Prostate gland (tissue), 2 donors: ENCODE measurements at regions of chr2 and their contacts with region 1.

Region 1: DNA sequence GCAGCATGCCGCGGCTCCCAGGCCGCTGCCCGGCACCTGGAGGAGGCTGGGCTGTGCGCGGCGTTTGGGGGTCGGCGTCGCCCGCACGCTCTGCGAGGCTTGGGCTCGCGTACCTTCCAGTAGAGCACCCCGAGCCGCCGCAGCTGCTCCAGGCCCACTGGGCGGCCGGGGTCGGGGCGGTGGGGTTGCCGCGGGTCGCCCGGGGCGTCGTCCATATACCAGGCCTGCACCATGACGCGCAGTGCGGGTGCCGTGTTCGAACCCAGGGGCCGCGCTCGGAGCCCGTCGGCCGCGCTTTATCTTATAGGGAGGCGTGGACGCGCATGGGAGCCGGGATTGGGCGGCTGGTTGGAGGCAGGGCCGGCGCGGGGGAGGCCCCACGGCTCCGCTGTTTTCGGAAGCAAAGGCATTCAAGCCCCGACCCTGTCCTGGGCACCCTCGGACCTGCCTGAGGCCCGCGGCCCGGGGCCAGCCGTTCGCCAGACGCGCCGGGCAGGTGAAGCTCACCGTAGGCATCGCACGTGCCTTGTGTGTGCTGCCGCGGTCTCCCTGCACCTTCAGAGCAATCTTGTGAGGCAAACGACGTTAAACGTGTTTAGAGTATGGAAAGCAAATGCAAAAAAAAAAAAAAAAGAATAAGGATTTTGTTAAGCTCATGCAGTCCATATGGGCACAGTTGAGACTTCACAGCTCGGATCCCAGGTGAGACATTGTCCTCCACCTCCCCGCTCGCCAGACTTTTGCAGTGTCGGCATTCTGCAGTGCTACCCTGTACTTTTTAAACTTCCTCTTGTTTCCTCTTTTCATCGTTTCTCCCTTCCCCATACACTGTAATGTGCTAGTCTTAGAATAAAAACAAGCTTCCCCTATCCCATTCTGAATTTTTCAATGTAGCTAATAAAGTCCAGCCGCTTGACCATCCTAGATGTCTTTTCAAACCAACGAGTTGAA is at the start of gene ADI1:
- DNase-seq: peak; percentile 75
- H3K4me3 ChIP-seq: peak within 1 kb of the TSS; percentile 85 to 95
- H3K27ac ChIP-seq: peak within 1 kb of the TSS; percentile 98 to 99
- H3K4me1 ChIP-seq: peaks cover 7% of the 10 kb centered on the region
- H3K27me3 ChIP-seq: no peaks in the 10 kb centered on the region
- CTCF ChIP-seq: no peak
- POLR2A ChIP-seq: peak; percentile 52
- total RNA-seq, gene ADI1: 81.7 to 270 TPM

Region 2: GRCh38 chr2:3449086-3449485 is 70.4 kb before region 1 on chr2:
- intact Hi-C with region 1: no loop called
- DNase-seq: no peak
- H3K4me3 ChIP-seq: no peak overlapping the region
- H3K27ac ChIP-seq: no peak overlapping the region
- H3K4me1 ChIP-seq: no peaks in the 10 kb centered on the region
- H3K27me3 ChIP-seq: no peaks in the 10 kb centered on the region
- CTCF ChIP-seq: no peak
- POLR2A ChIP-seq: no peak

Region 3: GRCh38 chr2:3470166-3470651 is 49.3 kb before region 1 on chr2:
- intact Hi-C with region 1: loop called (anchors 2 kb)
- DNase-seq: peak; percentile 86
- H3K4me3 ChIP-seq: no peak overlapping the region
- H3K27ac ChIP-seq: peak overlapping the region; percentile 74 to 78
- H3K4me1 ChIP-seq: peaks cover 28% of the 10 kb centered on the region
- H3K27me3 ChIP-seq: no peaks in the 10 kb centered on the region
- CTCF ChIP-seq: no peak
- POLR2A ChIP-seq: no peak

Region 4: GRCh38 chr2:3558205-3559014 is 38.9 kb after region 1 on chr2 and contains the start of gene RNASEH1:
- intact Hi-C with region 1: loop called (anchors 5 kb)
- DNase-seq: peak; percentile 97
- H3K4me3 ChIP-seq: peak within 1 kb of the TSS; percentile 94 to 99
- H3K27ac ChIP-seq: peak within 1 kb of the TSS; percentile 80 to 90
- H3K4me1 ChIP-seq: no peaks in the 10 kb centered on the region
- H3K27me3 ChIP-seq: no peaks in the 10 kb centered on the region
- CTCF ChIP-seq: no peak
- POLR2A ChIP-seq: peak; percentile 66
- total RNA-seq, gene RNASEH1: 19.1 to 31.5 TPM

Region 5: DNA sequence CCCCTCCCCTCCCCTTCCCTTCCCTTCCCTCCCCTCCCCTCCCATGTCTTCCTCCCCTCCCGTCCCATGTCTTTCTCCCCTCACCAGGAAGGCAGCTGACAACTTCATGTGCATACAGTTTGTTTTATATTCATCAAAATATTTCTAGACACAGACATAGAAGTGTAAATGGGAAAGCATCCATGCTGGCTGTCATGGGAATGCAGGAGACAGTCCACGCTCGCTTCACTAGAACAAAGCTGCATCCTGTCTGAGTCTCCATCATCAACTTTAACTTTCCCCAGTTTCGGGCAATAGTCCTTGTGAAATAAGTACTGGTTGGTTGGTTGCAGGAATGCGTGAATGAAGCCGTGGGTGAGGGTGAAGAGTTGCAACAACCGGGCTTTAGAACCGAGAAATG is 410.7 kb after region 1 on chr2:
- intact Hi-C with region 1: no loop called
- DNase-seq: no peak
- H3K4me3 ChIP-seq: no peak overlapping the region
- H3K27ac ChIP-seq: no peak overlapping the region
- H3K4me1 ChIP-seq: no peaks in the 10 kb centered on the region
- H3K27me3 ChIP-seq: no peaks in the 10 kb centered on the region
- CTCF ChIP-seq: no peak
- POLR2A ChIP-seq: no peak